ENCODE measurements at regions of chr17 and their contacts with region 1.

Region 1: GRCh38 chr17:75749545-75750389 is 15.2 kb downstream of the GALK1 start:
- DNase-seq: peak; percentile 65
- H3K4me3 ChIP-seq: no peak overlapping the region
- H3K27ac ChIP-seq: no peak overlapping the region
- H3K4me1 ChIP-seq: no peaks in the 10 kb centered on the region
- H3K27me3 ChIP-seq: no peaks in the 10 kb centered on the region
- CTCF ChIP-seq: peak; percentile 89 to 93
- POLR2A ChIP-seq: no peak

Region 2: DNA sequence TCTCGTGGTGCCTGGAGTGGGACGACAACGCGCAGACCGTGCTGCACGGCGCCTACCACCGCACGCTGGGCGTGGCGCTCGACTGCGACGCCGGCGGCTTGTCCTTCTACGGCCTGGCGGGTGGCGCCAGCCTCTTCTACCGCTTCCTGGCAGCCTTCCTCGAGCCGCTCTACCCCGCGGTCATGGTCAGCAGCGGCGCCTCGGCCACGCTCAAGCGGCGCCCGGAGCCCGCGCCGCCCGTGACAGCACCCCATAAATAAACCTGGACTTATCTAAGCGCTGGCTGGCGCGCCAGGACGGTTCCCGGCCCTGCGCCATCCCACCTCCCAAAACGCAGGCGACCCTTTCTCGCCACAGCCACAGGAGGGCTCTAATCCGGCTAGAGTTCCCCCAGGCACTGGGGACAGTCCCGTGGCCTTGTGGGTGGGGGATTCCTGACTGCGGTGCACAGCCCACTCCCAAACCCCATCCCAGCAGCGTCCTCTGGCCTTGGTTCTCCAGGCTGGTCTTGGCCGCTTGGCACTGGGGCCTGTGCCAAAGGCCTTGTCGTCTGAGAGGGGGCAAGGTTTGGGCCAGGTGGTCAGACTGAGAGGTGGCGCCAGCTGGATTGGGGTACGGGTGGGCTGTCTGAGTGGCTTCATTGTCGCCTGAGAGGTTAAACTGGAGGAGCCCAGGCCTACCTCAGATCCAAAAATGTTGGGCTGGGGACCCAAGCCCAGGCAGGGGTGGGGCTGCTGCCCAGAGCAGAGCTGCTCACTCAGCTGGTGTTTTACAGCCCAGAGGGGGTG is 672.1 kb before region 1 on chr17:
- CTCF ChIA-PET with region 1: no interaction called
- POLR2A ChIA-PET with region 1: no interaction called
- dilution Hi-C with region 1: no loop called
- intact Hi-C with region 1: no loop called
- DNase-seq: peak; percentile 58
- H3K4me3 ChIP-seq: peak overlapping the region in 1 of 3 experiments; percentile 34
- H3K27ac ChIP-seq: peak overlapping the region; percentile 51
- H3K4me1 ChIP-seq: peaks cover 16% of the 10 kb centered on the region
- H3K27me3 ChIP-seq: no peaks in the 10 kb centered on the region
- CTCF ChIP-seq: peak in 1 of 2 donors; percentile 36
- POLR2A ChIP-seq: no peak

Region 3: GRCh38 chr17:75430159-75430974 is 319.4 kb before region 1 on chr17:
- CTCF ChIA-PET with region 1: interaction called, 3 read pairs
- POLR2A ChIA-PET with region 1: no interaction called
- dilution Hi-C with region 1: no loop called
- intact Hi-C with region 1: loop called (anchors 1 kb)
- DNase-seq: no peak
- H3K4me3 ChIP-seq: no peak overlapping the region
- H3K27ac ChIP-seq: no peak overlapping the region
- H3K4me1 ChIP-seq: peaks cover 3% of the 10 kb centered on the region
- H3K27me3 ChIP-seq: peaks cover 3 to 6% of the 10 kb centered on the region in 2 experiments
- CTCF ChIP-seq: no peak
- POLR2A ChIP-seq: no peak

Region 4: DNA sequence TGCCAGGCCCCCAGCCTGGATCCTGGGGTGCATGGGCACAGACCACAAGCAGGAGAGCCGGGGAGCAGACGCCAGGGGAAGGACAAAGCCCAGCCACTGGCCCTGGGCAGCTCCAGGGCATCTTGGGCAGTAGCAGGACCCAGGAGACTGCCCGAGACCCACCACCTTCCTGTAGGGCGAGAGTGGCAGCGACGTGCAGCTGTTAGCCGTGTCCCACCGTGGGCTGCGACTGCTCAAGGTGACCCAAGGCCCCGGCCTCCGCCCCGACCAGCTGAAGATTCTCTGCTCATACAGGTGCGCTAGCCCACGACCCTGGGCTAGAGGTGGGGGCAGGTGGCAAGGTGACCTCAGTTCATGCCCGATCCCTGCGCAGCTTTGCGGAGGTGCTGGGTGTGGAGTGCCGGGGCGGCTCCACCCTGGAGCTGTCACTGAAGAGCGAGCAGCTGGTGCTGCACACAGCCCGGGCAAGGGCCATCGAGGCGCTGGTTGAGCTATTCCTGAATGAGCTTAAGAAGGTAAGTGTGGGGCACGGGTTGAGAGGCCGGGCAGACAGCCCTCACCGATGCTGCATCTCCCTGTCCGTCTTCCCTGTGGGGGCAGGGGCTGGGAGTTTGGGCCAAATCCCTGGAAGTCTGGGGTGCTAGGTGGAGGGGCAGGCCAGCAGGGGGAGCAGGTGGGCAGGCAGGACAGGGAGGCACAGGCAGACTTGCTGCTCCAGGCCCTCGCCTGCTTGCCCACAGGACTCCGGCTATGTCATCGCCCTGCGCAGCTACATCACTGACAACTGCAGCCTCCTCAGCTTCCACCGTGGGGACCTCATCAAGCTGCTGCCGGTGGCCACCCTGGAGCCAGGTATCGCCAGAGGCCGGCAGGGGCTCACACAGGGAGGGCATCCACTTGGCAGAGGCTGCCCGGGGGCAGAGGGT is 130.0 kb before region 1 on chr17:
- CTCF ChIA-PET with region 1: interaction called, 625 read pairs
- POLR2A ChIA-PET with region 1: no interaction called
- dilution Hi-C with region 1: no loop called
- intact Hi-C with region 1: loop called (anchors 1 kb)
- DNase-seq: peak; percentile 32
- H3K4me3 ChIP-seq: no peak overlapping the region
- H3K27ac ChIP-seq: no peak overlapping the region
- H3K4me1 ChIP-seq: no peaks in the 10 kb centered on the region
- H3K27me3 ChIP-seq: no peaks in the 10 kb centered on the region
- CTCF ChIP-seq: peak; percentile 56 to 81
- POLR2A ChIP-seq: no peak

Region 5: DNA sequence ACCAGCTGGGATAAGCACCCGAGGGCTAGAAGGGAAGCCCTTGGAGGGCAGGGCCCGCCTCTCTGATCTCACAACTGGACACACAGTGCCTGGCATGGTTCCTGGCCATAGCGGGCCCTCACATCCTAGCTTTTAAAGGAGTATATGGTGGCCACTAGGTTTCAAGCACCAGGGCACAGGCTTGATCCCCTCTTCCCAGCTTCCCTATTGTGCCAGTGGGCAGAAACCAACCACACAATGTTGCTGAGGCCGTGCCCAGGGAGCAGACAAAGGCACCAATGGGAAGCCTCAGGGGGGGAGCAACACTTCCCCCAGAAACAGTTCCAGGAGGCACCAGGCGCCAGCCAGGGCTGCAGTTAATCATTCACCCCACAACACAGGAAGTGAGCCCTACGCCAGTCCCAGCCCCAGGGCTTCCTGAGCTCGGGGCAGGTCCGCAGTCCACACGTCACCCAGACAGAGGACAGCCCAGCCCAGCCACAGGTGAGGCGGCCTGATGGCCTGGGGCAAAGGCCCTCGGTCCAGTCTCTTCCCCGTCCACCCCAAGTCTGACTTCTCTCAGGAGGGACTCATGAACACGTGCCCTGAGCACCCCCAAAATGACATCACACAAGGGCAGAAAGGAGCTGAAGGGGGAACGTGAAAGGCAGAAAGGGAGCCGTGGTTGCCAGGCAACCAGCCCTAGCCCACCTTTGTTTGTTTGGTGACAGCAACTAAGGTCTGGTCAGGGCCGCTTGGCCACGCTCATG is 103.7 kb before region 1 on chr17:
- CTCF ChIA-PET with region 1: interaction called, 68 read pairs
- POLR2A ChIA-PET with region 1: no interaction called
- dilution Hi-C with region 1: no loop called
- intact Hi-C with region 1: no loop called
- DNase-seq: peak; percentile 80
- H3K4me3 ChIP-seq: no peak overlapping the region
- H3K27ac ChIP-seq: peak overlapping the region; percentile 88
- H3K4me1 ChIP-seq: peaks cover 16% of the 10 kb centered on the region
- H3K27me3 ChIP-seq: no peaks in the 10 kb centered on the region
- CTCF ChIP-seq: no peak
- POLR2A ChIP-seq: no peak

Region 6: GRCh38 chr17:75679706-75680442 is 69.9 kb before region 1 on chr17:
- CTCF ChIA-PET with region 1: interaction called, 653 read pairs
- POLR2A ChIA-PET with region 1: interaction called, 3 read pairs
- dilution Hi-C with region 1: no loop called
- intact Hi-C with region 1: loop called (anchors 1 kb)
- DNase-seq: peak; percentile 89
- H3K4me3 ChIP-seq: no peak overlapping the region
- H3K27ac ChIP-seq: peak overlapping the region; percentile 42
- H3K4me1 ChIP-seq: peaks cover 46% of the 10 kb centered on the region
- H3K27me3 ChIP-seq: no peaks in the 10 kb centered on the region
- CTCF ChIP-seq: peak; percentile 33 to 39
- POLR2A ChIP-seq: no peak

Region 7: GRCh38 chr17:75720725-75721462 is 28.9 kb before region 1 on chr17 and contains the start of gene ITGB4:
- CTCF ChIA-PET with region 1: interaction called, 18 read pairs
- POLR2A ChIA-PET with region 1: no interaction called
- dilution Hi-C with region 1: no loop called
- intact Hi-C with region 1: no loop called
- DNase-seq: peak; percentile 30
- H3K4me3 ChIP-seq: peak within 1 kb of the TSS in 2 of 3 experiments; percentile 6 to 33
- H3K27ac ChIP-seq: no peak within 1 kb of the TSS
- H3K4me1 ChIP-seq: peaks cover 2% of the 10 kb centered on the region
- H3K27me3 ChIP-seq: peaks cover 6 to 11% of the 10 kb centered on the region in 2 experiments
- CTCF ChIP-seq: no peak
- POLR2A ChIP-seq: no peak
- total RNA-seq, gene ITGB4: 4.1 and 4.2 TPM in 2 replicates

Region 8: GRCh38 chr17:75827252-75828115 is 77.7 kb after region 1 on chr17:
- CTCF ChIA-PET with region 1: interaction called, 16 read pairs
- POLR2A ChIA-PET with region 1: no interaction called
- dilution Hi-C with region 1: no loop called
- intact Hi-C with region 1: no loop called
- DNase-seq: peak; percentile 82
- H3K4me3 ChIP-seq: peak overlapping the region in 2 of 3 experiments; percentile 21 to 30
- H3K27ac ChIP-seq: peak overlapping the region; percentile 22
- H3K4me1 ChIP-seq: peaks cover 7% of the 10 kb centered on the region
- H3K27me3 ChIP-seq: no peaks in the 10 kb centered on the region
- CTCF ChIP-seq: peak; percentile 85 to 91
- POLR2A ChIP-seq: peak; percentile 65